Heart right ventricle (tissue), 16 donors: ENCODE measurements at regions of chr5 and their contacts with region 1.

Region 1: DNA sequence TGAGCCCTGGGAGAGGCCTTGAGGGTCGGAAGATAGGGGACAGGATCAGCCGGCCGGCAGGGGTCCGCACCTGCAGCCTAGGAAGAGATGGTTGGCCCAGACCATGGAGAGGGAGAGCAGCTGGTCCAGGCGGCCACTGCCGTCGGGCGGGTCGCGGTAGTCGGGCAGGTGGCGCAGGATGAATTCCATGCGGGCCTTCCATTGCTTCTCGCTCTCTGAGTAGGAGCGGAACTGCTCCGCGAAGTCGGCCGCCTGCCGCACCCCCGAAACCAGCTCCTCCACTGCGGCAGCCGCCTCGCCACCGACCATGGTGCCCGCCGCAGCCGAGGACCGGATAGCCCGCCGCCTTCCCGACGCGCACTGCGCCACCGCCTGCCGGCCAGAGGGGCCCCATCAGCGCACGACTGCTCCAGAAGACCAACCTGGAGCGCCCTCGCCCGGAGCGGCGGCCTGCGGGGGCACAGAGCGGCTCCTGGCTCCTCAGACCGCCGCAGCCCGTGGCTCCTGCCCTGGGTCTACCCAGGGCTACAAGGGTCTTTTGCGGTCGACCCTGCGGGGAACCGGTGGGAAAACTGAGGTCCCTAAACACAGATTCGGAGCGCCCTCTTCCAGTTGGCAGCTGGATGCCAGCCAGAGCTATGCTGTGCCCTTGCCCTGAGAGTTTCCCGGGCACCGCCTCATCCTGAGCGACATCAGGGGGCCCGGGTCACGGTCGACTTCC is at the start of gene CDKN2AIPNL:
- DNase-seq: peak; percentile 92 to 94
- ATAC-seq: peak; percentile 99 to 100 (median 100)
- H3K4me3 ChIP-seq: peak within 1 kb of the TSS; percentile 63 to 98 (median 80)
- H3K27ac ChIP-seq: peak within 1 kb of the TSS; percentile 69 to 91 (median 86)
- H3K4me1 ChIP-seq: peaks cover 3 to 39% (median 32%) of the 10 kb centered on the region in 9 donors
- H3K27me3 ChIP-seq: no peaks in the 10 kb centered on the region
- CTCF ChIP-seq: peak; percentile 66 to 95 (median 83)
- total RNA-seq, gene CDKN2AIPNL: 29.1 to 39.8 (median 37.3) TPM

Region 2: DNA sequence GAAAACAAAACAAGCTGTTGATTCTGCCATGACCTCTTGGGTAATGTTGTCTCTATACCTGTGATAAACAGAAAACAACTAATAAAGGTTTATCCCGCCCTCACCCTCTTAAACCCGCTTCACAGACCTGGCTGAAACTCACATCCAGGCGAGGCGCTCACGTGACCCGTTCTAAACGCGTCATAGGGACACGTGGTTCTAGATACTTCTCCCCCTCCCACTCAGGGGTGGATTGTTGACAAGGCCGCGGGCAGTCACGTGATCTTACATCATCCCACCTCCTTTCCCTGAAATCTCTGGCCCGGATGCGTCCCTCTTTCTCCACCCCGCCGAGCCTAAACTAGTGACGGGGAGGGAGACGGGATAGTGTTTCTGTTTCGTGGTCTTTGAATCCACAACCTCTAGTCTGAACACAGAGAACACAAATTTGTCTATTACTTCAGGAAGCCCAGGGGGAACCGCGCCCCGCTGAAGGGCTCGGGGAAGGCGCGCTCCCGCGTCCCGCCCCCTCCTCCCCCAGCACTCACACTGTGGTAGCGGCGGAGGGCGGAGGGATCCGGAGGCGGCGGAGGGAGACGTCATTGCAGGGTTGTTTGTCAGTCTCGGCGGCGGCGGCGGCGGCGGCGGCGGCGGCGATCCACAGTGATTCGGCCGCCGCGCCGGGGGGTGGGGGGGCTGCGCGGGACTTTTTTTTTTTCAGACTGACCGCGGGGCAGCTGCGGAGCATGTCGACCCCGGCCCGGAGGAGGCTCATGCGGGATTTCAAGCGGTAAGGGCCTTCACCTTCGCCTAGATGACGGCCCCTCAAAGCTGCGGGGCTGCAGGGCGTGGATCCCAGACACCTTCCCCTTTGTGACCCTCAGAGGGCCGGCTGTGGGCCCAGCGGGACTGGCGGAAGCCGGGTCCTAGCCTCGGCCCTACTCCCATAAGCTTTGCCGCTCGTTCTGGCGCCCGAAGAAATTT is 40.6 kb before region 1 on chr5 and contains the start of gene UBE2B:
- intact Hi-C with region 1: loop called in 2 of 10 experiments (anchors 5 kb)
- DNase-seq: peak; percentile 95 to 99
- ATAC-seq: peak; percentile 91 to 97 (median 95)
- H3K4me3 ChIP-seq: peak within 1 kb of the TSS; percentile 64 to 97 (median 84)
- H3K27ac ChIP-seq: peak within 1 kb of the TSS; percentile 90 to 100 (median 98)
- H3K4me1 ChIP-seq: peaks cover 0 to 64% (median 51%) of the 10 kb centered on the region in 9 donors
- H3K27me3 ChIP-seq: no peaks in the 10 kb centered on the region
- CTCF ChIP-seq: no peak
- total RNA-seq, gene UBE2B: 195 to 260 (median 227) TPM

Region 3: DNA sequence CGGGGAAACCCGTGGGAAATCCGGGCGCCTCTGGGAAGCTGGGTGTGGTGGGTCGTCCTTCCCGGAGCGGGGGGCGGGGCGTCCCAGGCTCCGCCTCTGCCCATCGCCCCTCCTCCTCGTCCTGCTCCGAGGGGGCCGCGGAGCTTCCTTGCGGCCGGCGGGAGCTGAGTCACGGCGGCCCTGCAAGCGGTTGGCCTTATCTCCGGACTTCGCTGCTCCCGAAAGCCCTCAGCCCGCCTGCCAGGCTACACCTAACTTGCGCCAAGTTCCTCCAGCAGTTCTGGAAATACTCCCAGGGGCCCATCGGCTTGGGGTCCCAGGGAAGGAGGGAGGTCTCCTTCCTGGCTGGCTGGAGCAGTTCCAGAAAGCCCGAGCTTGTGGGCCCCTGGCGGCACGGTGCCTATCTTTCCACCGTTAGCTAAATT is 54.1 kb after region 1 on chr5:
- intact Hi-C with region 1: loop called in 6 of 10 experiments (anchors 1 to 10 kb)
- DNase-seq: peak; percentile 87 to 93
- ATAC-seq: peak; percentile 87 to 96 (median 92)
- H3K4me3 ChIP-seq: peak overlapping the region in 9 of 10 donors; percentile 45 to 70 (median 53)
- H3K27ac ChIP-seq: peak overlapping the region; percentile 90 to 99 (median 97)
- H3K4me1 ChIP-seq: peaks cover 12 to 39% (median 35%) of the 10 kb centered on the region in 9 donors
- H3K27me3 ChIP-seq: no peaks in the 10 kb centered on the region
- CTCF ChIP-seq: no peak

Region 4: GRCh38 chr5:134503088-134503946 is 91.6 kb after region 1 on chr5:
- intact Hi-C with region 1: loop called in 2 of 10 experiments (anchors 5 kb)
- DNase-seq: peak; percentile 64 to 68
- ATAC-seq: peak; percentile 56 to 87 (median 66)
- H3K4me3 ChIP-seq: no peak overlapping the region
- H3K27ac ChIP-seq: peak overlapping the region; percentile 23 to 86 (median 78)
- H3K4me1 ChIP-seq: peaks cover 4 to 46% (median 36%) of the 10 kb centered on the region in 9 donors
- H3K27me3 ChIP-seq: no peaks in the 10 kb centered on the region
- CTCF ChIP-seq: no peak

Region 5: GRCh38 chr5:134527146-134527960 is 115.6 kb after region 1 on chr5:
- intact Hi-C with region 1: loop called (anchors 1 to 10 kb)
- DNase-seq: peak; percentile 88 to 89
- ATAC-seq: peak; percentile 54 to 79 (median 68)
- H3K4me3 ChIP-seq: peak overlapping the region; percentile 66 to 99 (median 90)
- H3K27ac ChIP-seq: peak overlapping the region; percentile 96 to 100 (median 98)
- H3K4me1 ChIP-seq: peaks cover 25 to 57% (median 48%) of the 10 kb centered on the region in 9 donors
- H3K27me3 ChIP-seq: no peaks in the 10 kb centered on the region
- CTCF ChIP-seq: peak; percentile 72 to 87 (median 80)

Region 6: GRCh38 chr5:134586866-134587524 is 175.3 kb after region 1 on chr5:
- intact Hi-C with region 1: loop called in 3 of 10 experiments (anchors 5 to 10 kb)
- DNase-seq: peak; percentile 78 to 89
- ATAC-seq: peak; percentile 82 to 93 (median 88)
- H3K4me3 ChIP-seq: peak overlapping the region in 5 of 10 donors; percentile 7 to 31 (median 15)
- H3K27ac ChIP-seq: no peak overlapping the region
- H3K4me1 ChIP-seq: peaks cover 4 to 26% (median 16%) of the 10 kb centered on the region in 9 donors
- H3K27me3 ChIP-seq: no peaks in the 10 kb centered on the region
- CTCF ChIP-seq: peak; percentile 65 to 92 (median 81)

Region 7: DNA sequence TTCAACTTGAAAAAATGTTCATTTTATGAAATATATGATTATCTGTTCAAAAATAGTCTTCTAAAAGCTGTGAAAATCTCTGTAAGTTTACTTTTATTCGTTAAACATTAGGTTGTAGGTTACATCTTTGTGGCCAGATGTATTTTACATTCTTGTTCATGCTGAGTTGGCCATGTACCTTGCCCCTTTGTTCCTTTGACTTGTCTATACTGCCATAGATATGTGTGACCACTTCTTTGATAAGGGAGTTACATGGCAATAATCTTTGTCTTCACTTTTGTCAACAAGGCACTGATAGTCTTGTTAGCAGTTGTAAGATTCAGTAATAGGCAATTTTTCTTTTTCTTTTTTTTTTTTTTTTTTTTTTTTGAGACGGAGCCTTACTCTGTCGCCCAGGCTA is 252.7 kb after region 1 on chr5:
- intact Hi-C with region 1: no loop called
- DNase-seq: no peak
- ATAC-seq: no peak
- H3K4me3 ChIP-seq: no peak overlapping the region
- H3K27ac ChIP-seq: no peak overlapping the region
- H3K4me1 ChIP-seq: peaks cover 0 to 10% (median 0%) of the 10 kb centered on the region in 9 donors
- H3K27me3 ChIP-seq: no peaks in the 10 kb centered on the region
- CTCF ChIP-seq: no peak

Region 8: GRCh38 chr5:135032999-135033897 is 621.5 kb after region 1 on chr5:
- intact Hi-C with region 1: no loop called
- DNase-seq: no peak
- ATAC-seq: no peak
- H3K4me3 ChIP-seq: peak overlapping the region; percentile 12 to 57 (median 38)
- H3K27ac ChIP-seq: no peak overlapping the region
- H3K4me1 ChIP-seq: peaks cover 9 to 54% (median 40%) of the 10 kb centered on the region in 9 donors
- H3K27me3 ChIP-seq: peaks cover 56 to 100% (median 98%) of the 10 kb centered on the region in 7 donors
- CTCF ChIP-seq: no peak